Activated CD8-positive, alpha-beta T cell treated with anti-CD3 and anti-CD28 coated beads, Interleukin-2, amount 10 ng/mL, durations not matched to agents 7 days and 5 days (primary cell): ENCODE measurements at regions of chr13 and their contacts with region 1.

Region 1: GRCh38 chr13:51844862-51845573 is at the start of gene TMEM272:
- DNase-seq: peak; percentile 51
- ATAC-seq: peak; percentile 70
- H3K4me3 Mint-ChIP-seq: peak within 1 kb of the TSS; percentile 24
- H3K27ac Mint-ChIP-seq: no peak within 1 kb of the TSS
- H3K4me1 Mint-ChIP-seq: peaks cover 13% of the 10 kb centered on the region
- H3K27me3 Mint-ChIP-seq: peaks cover 13% of the 10 kb centered on the region
- total RNA-seq, gene TMEM272: 0.23 to 0.29 TPM

Region 2: GRCh38 chr13:51825165-51825592 is 19.8 kb before region 1 on chr13:
- CTCF ChIA-PET with region 1: interaction called, 11 read pairs
- POLR2A ChIA-PET with region 1: no interaction called
- DNase-seq: peak; percentile 44
- ATAC-seq: peak; percentile 66
- H3K4me3 Mint-ChIP-seq: peak overlapping the region; percentile 60
- H3K27ac Mint-ChIP-seq: peak overlapping the region; percentile 82
- H3K4me1 Mint-ChIP-seq: peaks cover 80% of the 10 kb centered on the region
- H3K27me3 Mint-ChIP-seq: no peaks in the 10 kb centered on the region

Region 3: GRCh38 chr13:51861723-51862300 is 16.8 kb after region 1 on chr13 and contains the start of gene CCDC70:
- CTCF ChIA-PET with region 1: interaction called, 13 read pairs
- POLR2A ChIA-PET with region 1: no interaction called
- DNase-seq: peak; percentile 25
- ATAC-seq: peak; percentile 53
- H3K4me3 Mint-ChIP-seq: no peak within 1 kb of the TSS
- H3K27ac Mint-ChIP-seq: no peak within 1 kb of the TSS
- H3K4me1 Mint-ChIP-seq: peaks cover 19% of the 10 kb centered on the region
- H3K27me3 Mint-ChIP-seq: peaks cover 2% of the 10 kb centered on the region
- total RNA-seq, gene CCDC70: not detected

Region 4: GRCh38 chr13:52405767-52406494 is 560.9 kb after region 1 on chr13 and contains the start of gene THSD1:
- CTCF ChIA-PET with region 1: no interaction called
- POLR2A ChIA-PET with region 1: no interaction called
- DNase-seq: peak; percentile 25
- ATAC-seq: peak; percentile 88
- H3K4me3 Mint-ChIP-seq: peak within 1 kb of the TSS; percentile 60
- H3K27ac Mint-ChIP-seq: no peak within 1 kb of the TSS
- H3K4me1 Mint-ChIP-seq: peaks cover 24% of the 10 kb centered on the region
- H3K27me3 Mint-ChIP-seq: peaks cover 20% of the 10 kb centered on the region
- total RNA-seq, gene THSD1: 0.08 to 0.16 TPM